ENCODE measurements at regions of chr4 and their contacts with region 1.

Region 1: DNA sequence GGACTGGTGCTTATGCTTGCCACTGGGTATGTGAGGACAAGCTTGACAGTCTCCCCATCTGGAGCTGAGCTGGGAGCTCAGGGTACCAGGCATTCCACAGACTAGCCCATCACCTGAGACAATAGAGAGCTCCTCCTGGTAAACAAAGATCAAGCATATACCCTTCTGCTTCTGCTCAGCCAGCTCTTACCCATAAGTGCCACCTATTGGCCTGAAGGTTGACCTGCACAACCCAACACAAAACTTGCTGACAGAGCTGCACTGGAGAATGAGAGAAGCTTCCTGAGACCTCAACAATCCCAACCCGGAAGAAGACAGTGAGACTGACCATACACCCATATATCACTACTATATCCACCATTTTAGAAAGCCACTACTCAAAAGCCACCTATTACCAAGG is 1049.2 kb upstream of the INTU start:
- DNase-seq: no peak
- H3K4me3 ChIP-seq: no peak overlapping the region
- H3K27ac ChIP-seq: no peak overlapping the region
- H3K4me1 ChIP-seq: no peaks in the 10 kb centered on the region
- H3K27me3 ChIP-seq: no peaks in the 10 kb centered on the region
- CTCF ChIP-seq: no peak
- POLR2A ChIP-seq: no peak

Region 2: DNA sequence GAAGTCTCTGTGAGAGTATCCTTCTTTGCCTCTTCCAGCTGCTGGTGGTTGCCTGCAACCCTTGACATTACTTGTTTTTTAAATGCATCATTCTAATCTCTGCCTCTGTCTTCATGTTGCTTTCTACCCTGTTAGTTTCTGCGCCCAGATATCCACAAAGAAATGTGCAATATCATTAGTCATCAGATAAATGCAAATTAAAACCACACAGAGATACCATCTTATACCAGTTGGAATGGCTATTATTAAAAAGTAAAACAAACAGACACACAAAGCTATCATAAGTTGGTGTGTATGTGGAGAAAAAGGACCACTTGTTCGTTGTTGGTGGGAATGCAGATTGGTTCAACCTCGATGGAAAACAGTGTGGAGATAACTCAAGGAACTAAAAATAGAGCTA is 751.3 kb before region 1 on chr4:
- intact Hi-C with region 1: loop called (anchors 5 kb)
- DNase-seq: no peak
- H3K4me3 ChIP-seq: no peak overlapping the region
- H3K27ac ChIP-seq: no peak overlapping the region
- H3K4me1 ChIP-seq: no peaks in the 10 kb centered on the region
- H3K27me3 ChIP-seq: no peaks in the 10 kb centered on the region
- CTCF ChIP-seq: no peak
- POLR2A ChIP-seq: no peak